ENCODE measurements at regions of chr4 and their contacts with region 1.

Region 1: GRCh38 chr4:1243451-1244080 is 5.4 kb downstream of the CTBP1 start:
- DNase-seq: no peak
- H3K4me3 ChIP-seq: no peak overlapping the region
- CTCF ChIP-seq: no peak

Region 2: DNA sequence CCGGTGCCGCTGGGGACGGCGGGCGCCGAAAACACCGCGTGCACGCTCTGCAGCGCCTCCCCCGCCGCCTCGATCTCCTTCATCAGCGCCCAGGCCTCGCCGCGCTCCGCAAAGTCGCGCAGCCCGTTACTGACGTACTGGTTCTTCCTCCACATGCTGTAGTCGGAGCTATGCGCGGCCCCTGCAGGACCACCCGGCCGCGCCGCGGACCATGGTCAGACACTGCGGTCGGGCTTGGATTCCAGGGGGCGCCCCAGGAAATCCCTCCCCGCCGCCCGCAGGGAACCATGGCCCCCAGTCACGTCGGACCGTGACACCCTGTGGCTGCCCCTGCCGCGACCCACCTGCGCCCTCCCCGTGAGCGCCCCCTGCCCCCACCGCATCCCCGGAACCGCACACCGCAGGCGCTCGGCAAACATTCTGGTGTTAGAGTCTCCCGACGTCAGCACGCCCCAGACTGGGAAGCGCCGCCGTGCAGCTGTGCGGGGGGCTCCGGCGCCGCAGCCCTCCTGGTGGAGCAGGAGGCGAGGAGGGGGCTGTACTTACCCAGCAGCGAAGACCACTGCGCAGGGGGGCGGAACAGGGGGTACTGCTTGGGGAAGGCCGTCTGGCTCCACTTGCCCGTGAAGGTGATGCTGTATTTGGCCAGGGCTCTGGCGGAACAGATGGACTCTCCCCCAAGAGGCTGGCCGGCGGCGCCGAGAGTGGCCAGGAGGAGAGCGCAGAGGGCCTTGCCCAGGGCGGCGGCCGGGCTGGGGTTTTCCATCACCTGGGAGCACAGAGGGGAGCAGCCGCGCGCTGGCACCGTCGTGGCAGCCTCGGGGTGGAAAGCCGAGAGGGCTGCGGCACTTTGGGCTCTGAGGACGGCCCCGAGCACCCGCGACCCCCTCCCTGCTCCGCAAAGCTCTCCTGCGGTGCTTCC is 72.0 kb before region 1 on chr4:
- in situ Hi-C with region 1: loop called (anchors 5 kb)
- DNase-seq: no peak
- H3K4me3 ChIP-seq: peak overlapping the region; percentile 16
- CTCF ChIP-seq: no peak

Region 3: GRCh38 chr4:1200425-1201035 is 43.0 kb before region 1 on chr4:
- in situ Hi-C with region 1: loop called (anchors 5 kb)
- DNase-seq: peak; percentile 59
- H3K4me3 ChIP-seq: no peak overlapping the region
- CTCF ChIP-seq: no peak